A673 (cell line): ENCODE measurements at regions of chrX and their contacts with region 1.

Region 1: DNA sequence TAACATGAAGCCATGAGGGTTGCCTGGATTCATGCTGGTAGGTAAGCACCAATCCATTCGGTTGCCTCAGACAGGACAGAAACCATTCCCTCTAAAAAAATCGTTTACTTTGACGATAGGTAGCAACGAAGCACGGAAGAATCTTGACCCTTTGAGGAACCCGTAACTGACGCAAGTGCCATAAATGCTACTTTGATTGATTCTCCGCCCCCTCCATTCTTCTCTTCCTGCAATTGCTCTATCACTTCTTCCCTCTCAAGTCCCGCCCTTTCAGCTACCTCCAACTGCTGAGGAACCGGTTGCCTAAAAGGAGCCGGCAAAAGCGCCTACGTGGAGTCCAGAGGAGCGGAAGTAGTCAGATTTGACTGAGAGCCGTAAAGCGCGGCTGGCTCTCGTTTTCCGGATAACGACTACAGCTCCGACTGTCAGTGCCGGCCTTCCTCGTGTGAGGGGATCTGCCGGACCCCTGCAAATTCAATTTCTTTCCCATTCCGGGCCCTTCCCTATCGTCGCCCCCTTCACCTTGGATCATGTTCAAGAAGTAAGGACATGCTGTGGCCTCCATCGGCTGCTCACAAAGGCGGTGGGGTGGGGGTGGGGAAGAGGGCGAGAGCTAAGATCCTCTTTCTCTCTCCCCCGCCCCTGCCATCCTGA is at the start of gene MCTS1:
- DNase-seq: peak; percentile 96
- H3K4me3 ChIP-seq: peak within 1 kb of the TSS; percentile 64
- H3K27ac ChIP-seq: peak within 1 kb of the TSS; percentile 88
- H3K4me1 ChIP-seq: no peaks in the 10 kb centered on the region
- H3K27me3 ChIP-seq: no peaks in the 10 kb centered on the region
- CTCF ChIP-seq: no peak
- total RNA-seq, gene MCTS1: 54.6 and 62.3 TPM in 2 replicates

Region 2: DNA sequence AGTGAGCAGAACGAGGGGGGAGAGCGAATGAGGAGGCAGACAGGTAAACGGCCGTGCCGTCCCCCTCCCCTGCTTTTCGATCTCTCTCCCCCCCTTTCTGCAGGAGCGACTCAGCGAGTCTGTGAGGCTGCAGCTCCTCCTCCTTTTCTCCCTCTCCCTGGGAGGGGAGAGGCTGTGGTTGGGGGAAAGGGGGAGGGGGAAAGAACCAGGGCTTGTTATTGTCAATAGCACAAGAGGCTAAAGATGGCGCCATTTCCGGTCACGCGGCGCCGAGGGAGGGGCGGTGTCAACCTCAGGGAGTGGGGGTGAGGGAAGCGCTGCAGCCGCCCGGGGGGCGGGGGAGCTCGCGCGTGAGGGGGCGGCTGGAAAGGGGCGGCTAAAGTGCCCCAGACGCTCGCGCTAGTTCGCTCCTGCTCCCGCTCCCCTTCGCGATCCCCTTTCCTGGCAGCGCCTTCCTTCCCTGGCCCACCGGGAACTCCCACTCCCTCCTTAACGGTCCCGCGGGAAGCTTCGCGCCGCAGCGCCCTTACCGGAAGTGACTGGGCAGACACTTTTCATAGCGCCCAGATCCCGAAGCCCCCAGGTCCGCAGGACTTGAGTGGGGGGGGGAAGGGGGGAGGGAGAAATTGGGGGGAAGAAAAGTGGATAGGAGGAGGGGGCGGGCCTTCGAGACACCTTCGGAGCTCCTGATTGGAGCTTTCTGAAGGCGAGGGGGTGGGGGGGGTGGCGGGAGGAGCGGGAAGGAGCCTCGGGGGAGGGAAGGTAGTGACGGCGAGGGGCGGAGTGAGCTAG is 42.8 kb before region 1 on chrX and contains the start of gene CUL4B:
- CTCF ChIA-PET with region 1: no interaction called
- POLR2A ChIA-PET with region 1: interaction called, 25 read pairs
- intact Hi-C with region 1: loop called (anchors 5 kb)
- DNase-seq: peak; percentile 95
- H3K4me3 ChIP-seq: peak within 1 kb of the TSS; percentile 67
- H3K27ac ChIP-seq: peak within 1 kb of the TSS; percentile 98
- H3K4me1 ChIP-seq: peaks cover 5% of the 10 kb centered on the region
- H3K27me3 ChIP-seq: no peaks in the 10 kb centered on the region
- CTCF ChIP-seq: no peak
- total RNA-seq, gene CUL4B: 41.8 and 44.7 TPM in 2 replicates